Heart right ventricle (tissue), 16 donors: ENCODE measurements at regions of chr14 and their contacts with region 1.

Region 1: DNA sequence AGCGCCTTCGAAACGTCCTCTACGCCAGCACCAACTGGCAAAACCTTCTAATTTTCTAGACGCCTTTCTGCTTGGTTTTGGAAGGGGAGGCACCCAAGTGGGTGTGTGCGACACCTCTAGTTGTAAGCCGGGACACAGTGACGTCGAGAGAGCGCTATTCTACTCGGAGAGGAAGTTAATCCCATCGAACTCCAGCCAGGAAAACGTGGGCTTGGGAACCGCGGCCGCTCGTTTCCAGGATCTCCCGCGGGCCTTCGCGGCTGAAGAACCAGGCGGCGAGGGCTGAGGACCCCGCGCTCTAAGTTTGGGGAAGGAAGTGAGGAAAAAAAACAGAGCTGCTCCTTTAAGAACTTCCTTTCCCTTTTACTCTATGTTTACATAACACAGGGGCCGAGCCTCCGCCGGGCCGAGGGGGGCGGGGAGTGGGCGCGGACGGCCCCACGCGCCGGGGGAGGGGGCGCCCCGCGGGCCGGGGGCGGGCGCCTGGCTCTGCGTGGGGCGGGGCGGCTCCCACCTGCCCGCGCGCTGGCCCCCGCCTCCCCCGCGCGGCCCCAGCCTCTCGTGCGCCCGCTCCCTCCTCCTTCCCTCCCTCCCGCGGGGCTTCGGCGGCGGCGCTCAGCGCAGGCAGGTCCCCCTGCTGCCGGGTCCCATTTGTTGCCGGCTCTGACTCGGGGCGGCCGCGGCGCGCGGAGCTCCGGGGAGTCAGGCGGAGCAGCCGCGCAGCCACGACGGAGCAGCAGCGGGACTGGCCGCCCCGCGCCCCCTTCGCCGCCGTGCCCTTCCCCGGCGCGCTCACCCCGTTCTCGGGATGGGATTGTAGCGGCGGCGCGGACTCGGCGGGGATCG is at the start of gene PELI2:
- DNase-seq: peak; percentile 77 to 78
- ATAC-seq: peak; percentile 77 to 88 (median 83)
- H3K4me3 ChIP-seq: peak within 1 kb of the TSS; percentile 43 to 88 (median 79)
- H3K27ac ChIP-seq: peak within 1 kb of the TSS; percentile 83 to 94 (median 88)
- H3K4me1 ChIP-seq: peaks cover 3 to 44% (median 18%) of the 10 kb centered on the region in 9 donors
- H3K27me3 ChIP-seq: no peaks in the 10 kb centered on the region
- CTCF ChIP-seq: peak in 4 of 9 donors; percentile 15 to 31 (median 22)
- total RNA-seq, gene PELI2: 1.2 to 4.9 (median 2.3) TPM

Region 2: GRCh38 chr14:55731881-55732498 is 386.0 kb before region 1 on chr14:
- intact Hi-C with region 1: loop called in 1 of 10 experiments (anchors 10 kb)
- DNase-seq: peak in 1 of 2 donors; percentile 47
- ATAC-seq: peak in 2 of 8 donors; percentile 20 to 33
- H3K4me3 ChIP-seq: no peak overlapping the region
- H3K27ac ChIP-seq: no peak overlapping the region
- H3K4me1 ChIP-seq: no peaks in the 10 kb centered on the region
- H3K27me3 ChIP-seq: no peaks in the 10 kb centered on the region
- CTCF ChIP-seq: peak; percentile 26 to 76 (median 71)

Region 3: GRCh38 chr14:55986069-55986468 is 131.9 kb before region 1 on chr14:
- intact Hi-C with region 1: no loop called
- DNase-seq: no peak
- ATAC-seq: no peak
- H3K4me3 ChIP-seq: no peak overlapping the region
- H3K27ac ChIP-seq: no peak overlapping the region
- H3K4me1 ChIP-seq: no peaks in the 10 kb centered on the region
- H3K27me3 ChIP-seq: peaks cover 0 to 9% (median 0%) of the 10 kb centered on the region in 7 donors
- CTCF ChIP-seq: no peak

Region 4: GRCh38 chr14:56205881-56206280 is 87.9 kb after region 1 on chr14:
- intact Hi-C with region 1: no loop called
- DNase-seq: no peak
- ATAC-seq: no peak
- H3K4me3 ChIP-seq: no peak overlapping the region
- H3K27ac ChIP-seq: no peak overlapping the region
- H3K4me1 ChIP-seq: peaks cover 0 to 17% (median 0%) of the 10 kb centered on the region in 9 donors
- H3K27me3 ChIP-seq: no peaks in the 10 kb centered on the region
- CTCF ChIP-seq: no peak

Region 5: DNA sequence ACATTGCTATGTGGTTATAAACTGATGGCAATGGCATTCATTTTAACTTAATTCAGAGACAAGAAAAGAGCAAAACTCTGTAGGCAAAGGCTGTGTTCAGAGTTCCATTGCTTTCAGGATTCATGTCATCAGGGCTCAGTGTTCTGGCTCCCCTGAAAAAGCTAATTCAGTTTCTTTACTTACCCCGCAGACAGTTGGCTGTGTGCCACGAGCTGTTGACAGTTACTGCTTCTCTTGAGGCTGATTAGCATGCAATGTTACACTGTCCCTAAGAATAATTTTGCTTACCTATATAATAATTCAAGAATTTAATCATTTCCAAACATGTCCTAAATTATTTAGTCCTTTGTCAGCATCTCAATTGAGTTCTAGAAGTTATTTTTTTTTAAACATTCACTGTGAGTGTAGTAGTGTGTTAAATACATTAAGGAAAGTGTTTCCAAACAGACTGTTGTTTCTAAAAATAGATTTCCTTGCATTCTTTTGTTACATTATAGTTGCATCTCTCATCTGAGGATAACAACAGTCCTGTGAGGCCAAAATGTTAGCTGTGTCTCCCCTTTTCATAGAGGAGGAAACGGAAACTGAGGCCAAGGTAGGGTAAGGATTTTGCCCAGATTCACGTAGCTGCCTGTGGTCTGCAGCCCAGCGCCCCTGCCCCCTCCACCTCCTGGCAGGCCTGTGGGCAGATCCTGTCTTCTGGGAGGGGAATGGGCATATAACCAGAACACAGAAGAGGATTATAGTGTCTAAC is 98.8 kb after region 1 on chr14:
- intact Hi-C with region 1: loop called in 1 of 10 experiments (anchors 5 kb)
- DNase-seq: peak; percentile 60 to 62
- ATAC-seq: peak in 4 of 8 donors; percentile 20 to 63 (median 35)
- H3K4me3 ChIP-seq: no peak overlapping the region
- H3K27ac ChIP-seq: peak overlapping the region in 2 of 10 donors; percentile 11 to 16
- H3K4me1 ChIP-seq: peaks cover 11 to 69% (median 52%) of the 10 kb centered on the region in 9 donors
- H3K27me3 ChIP-seq: no peaks in the 10 kb centered on the region
- CTCF ChIP-seq: no peak